Breast epithelium (tissue), 4 donors: ENCODE measurements at regions of chr10 and their contacts with region 1.

Region 1: GRCh38 chr10:17075533-17076359 is 53.9 kb downstream of the CUBN start:
- DNase-seq: no peak
- H3K4me3 ChIP-seq: no peak overlapping the region
- H3K27ac ChIP-seq: peak overlapping the region; percentile 34 to 43
- H3K4me1 ChIP-seq: no peaks in the 10 kb centered on the region
- H3K27me3 ChIP-seq: no peaks in the 10 kb centered on the region
- CTCF ChIP-seq: no peak
- POLR2A ChIP-seq: no peak

Region 2: DNA sequence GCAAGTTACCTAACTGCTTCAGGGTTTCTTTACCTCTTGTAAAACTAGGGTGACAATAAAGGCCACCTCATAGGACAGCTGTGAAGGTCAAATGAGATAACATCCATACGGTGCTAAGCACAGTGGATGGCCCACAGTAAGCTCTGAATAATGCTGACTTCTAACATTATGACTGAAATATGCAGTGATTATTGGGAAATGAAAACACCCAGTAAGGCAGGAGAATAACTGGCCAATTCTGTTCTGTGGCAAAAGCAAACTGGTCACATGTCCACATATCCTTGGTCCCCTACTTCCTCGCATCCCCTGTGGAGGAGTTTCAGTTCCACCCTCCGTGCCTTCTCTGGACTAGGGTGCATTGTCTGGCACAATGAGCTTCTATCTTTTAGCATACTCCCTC is 52.5 kb after region 1 on chr10:
- intact Hi-C with region 1: loop called (anchors 2 kb)
- DNase-seq: no peak
- H3K4me3 ChIP-seq: no peak overlapping the region
- H3K27ac ChIP-seq: no peak overlapping the region
- H3K4me1 ChIP-seq: no peaks in the 10 kb centered on the region
- H3K27me3 ChIP-seq: no peaks in the 10 kb centered on the region
- CTCF ChIP-seq: no peak
- POLR2A ChIP-seq: no peak